H1 (cell line): ENCODE measurements at regions of chr1 and their contacts with region 1.

Region 1: DNA sequence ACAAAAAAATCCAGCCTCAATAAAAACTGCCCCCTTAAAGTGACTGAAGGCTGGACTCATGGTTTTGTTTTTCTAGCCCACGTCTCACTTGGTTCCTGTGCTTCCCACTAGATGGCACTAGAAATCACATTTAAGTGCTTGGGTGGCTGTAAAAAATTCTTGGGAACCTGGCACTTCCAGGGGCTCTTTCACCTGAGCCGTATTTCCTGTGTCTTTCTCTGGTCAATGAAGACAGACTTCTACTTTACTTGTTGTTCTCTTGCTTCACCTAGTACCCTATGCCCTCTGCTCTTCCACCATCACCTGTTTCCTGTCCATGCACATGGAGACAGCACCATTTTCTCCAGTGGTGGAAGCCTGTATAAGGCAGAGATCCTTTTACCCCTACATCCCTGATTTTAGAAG is 20.0 kb downstream of the METTL13 start:
- DNase-seq: no peak
- H3K4me3 ChIP-seq: no peak overlapping the region
- H3K27ac ChIP-seq: no peak overlapping the region
- H3K4me1 ChIP-seq: peaks cover 0 to 11% (median 5%) of the 10 kb centered on the region in 4 experiments; a peak in 3 of 7 replicates
- H3K27me3 ChIP-seq: no peaks in the 10 kb centered on the region
- CTCF ChIP-seq: peak in 2 of 3 experiments; percentile 75 to 87; a peak in 3 of 4 replicates
- EP300 ChIP-seq: no peak
- POLR2A ChIP-seq: no peak
- RAD21 ChIP-seq: peak; percentile 87 to 94

Region 2: GRCh38 chr1:171644805-171645483 is 156.5 kb before region 1 on chr1:
- CTCF ChIA-PET with region 1: interaction called, 52 read pairs
- POLR2A ChIA-PET with region 1: no interaction called
- DNase-seq: peak; percentile 82 to 89
- H3K4me3 ChIP-seq: peak overlapping the region in 1 of 4 experiments; percentile 14; a peak in 1 of 8 replicates
- H3K27ac ChIP-seq: no peak overlapping the region
- H3K4me1 ChIP-seq: peaks cover 2 to 15% (median 7%) of the 10 kb centered on the region in 4 experiments
- H3K27me3 ChIP-seq: no peaks in the 10 kb centered on the region
- CTCF ChIP-seq: peak; percentile 69 to 99 (median 89)
- EP300 ChIP-seq: no peak
- POLR2A ChIP-seq: no peak
- RAD21 ChIP-seq: peak; percentile 89 to 91

Region 3: GRCh38 chr1:171788696-171789095 is 12.8 kb before region 1 on chr1:
- CTCF ChIA-PET with region 1: interaction called, 24 read pairs
- POLR2A ChIA-PET with region 1: interaction called, 4 read pairs
- DNase-seq: no peak
- H3K4me3 ChIP-seq: no peak overlapping the region
- H3K27ac ChIP-seq: no peak overlapping the region
- H3K4me1 ChIP-seq: no peaks in the 10 kb centered on the region
- H3K27me3 ChIP-seq: no peaks in the 10 kb centered on the region
- CTCF ChIP-seq: no peak
- EP300 ChIP-seq: no peak
- POLR2A ChIP-seq: no peak
- RAD21 ChIP-seq: no peak

Region 4: DNA sequence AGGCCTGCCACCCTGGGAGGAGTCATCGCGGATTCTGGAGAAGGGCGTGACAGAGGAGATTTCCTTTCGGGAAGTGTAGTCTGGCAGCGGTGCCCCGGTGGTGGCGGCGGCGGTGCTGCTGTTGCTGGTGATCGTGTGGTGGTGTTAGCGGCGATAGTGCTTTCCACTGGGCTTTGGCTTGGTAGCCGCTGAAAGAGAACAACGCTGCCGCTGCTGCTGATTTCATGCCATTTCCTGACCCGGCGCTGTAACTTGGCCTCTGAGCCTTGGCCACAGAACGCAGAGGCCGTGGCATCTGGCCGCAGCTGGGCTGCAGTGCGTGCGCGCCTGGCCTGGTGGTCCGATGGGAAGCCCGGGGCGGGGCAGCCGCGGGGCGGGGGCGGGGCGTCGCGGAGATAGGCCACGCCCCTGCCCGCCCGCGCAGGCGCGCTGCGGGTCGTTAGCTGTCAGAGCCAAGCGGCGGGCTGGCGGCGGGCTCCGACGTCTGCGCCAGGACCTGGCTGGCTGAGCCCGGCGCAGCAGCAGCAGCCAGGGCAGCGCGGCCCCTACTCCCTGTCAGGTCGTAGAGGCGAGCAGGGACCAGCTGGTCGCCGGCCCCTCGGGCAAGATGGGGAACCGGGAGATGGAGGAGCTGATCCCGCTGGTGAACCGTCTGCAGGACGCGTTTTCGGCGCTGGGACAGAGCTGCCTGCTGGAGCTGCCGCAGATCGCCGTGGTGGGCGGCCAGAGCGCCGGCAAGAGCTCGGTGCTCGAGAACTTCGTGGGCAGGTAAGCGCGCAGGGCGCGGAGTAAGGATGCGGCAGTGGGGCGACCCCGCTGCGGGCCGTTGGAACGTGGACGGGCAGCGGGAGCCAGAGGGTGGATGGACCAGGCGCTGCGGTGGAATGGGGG is 39.8 kb after region 1 on chr1 and contains the start of gene DNM3:
- CTCF ChIA-PET with region 1: interaction called, 34 read pairs
- POLR2A ChIA-PET with region 1: no interaction called
- DNase-seq: peak; percentile 57 to 93
- H3K4me3 ChIP-seq: peak within 1 kb of the TSS; percentile 74 to 93 (median 88)
- H3K27ac ChIP-seq: no peak within 1 kb of the TSS
- H3K4me1 ChIP-seq: peaks cover 0 to 6% (median 2%) of the 10 kb centered on the region in 4 experiments; a peak in 1 of 7 replicates
- H3K27me3 ChIP-seq: peaks cover 0 to 4% (median 1%) of the 10 kb centered on the region in 4 experiments; a peak in 3 of 7 replicates
- CTCF ChIP-seq: no peak
- EP300 ChIP-seq: no peak
- POLR2A ChIP-seq: peak; percentile 42 to 72
- RAD21 ChIP-seq: no peak; a peak in 1 of 4 replicates
- total RNA-seq, gene DNM3: 7.4 and 8.5 TPM in 2 replicates

Region 5: GRCh38 chr1:171913385-171913784 is 111.9 kb after region 1 on chr1:
- CTCF ChIA-PET with region 1: interaction called, 11 read pairs
- POLR2A ChIA-PET with region 1: no interaction called
- DNase-seq: no peak
- H3K4me3 ChIP-seq: no peak overlapping the region
- H3K27ac ChIP-seq: no peak overlapping the region
- H3K4me1 ChIP-seq: peaks cover 0 to 8% (median 7%) of the 10 kb centered on the region in 4 experiments; a peak in 3 of 7 replicates
- H3K27me3 ChIP-seq: no peaks in the 10 kb centered on the region
- CTCF ChIP-seq: no peak
- EP300 ChIP-seq: no peak
- POLR2A ChIP-seq: no peak
- RAD21 ChIP-seq: no peak

Region 6: GRCh38 chr1:171965777-171966176 is 164.3 kb after region 1 on chr1:
- CTCF ChIA-PET with region 1: interaction called, 91 read pairs
- POLR2A ChIA-PET with region 1: no interaction called
- DNase-seq: no peak
- H3K4me3 ChIP-seq: no peak overlapping the region
- H3K27ac ChIP-seq: no peak overlapping the region
- H3K4me1 ChIP-seq: peaks cover 2 to 12% (median 7%) of the 10 kb centered on the region in 4 experiments; a peak in 6 of 7 replicates
- H3K27me3 ChIP-seq: no peaks in the 10 kb centered on the region
- CTCF ChIP-seq: no peak
- EP300 ChIP-seq: no peak
- POLR2A ChIP-seq: no peak
- RAD21 ChIP-seq: no peak

Region 7: DNA sequence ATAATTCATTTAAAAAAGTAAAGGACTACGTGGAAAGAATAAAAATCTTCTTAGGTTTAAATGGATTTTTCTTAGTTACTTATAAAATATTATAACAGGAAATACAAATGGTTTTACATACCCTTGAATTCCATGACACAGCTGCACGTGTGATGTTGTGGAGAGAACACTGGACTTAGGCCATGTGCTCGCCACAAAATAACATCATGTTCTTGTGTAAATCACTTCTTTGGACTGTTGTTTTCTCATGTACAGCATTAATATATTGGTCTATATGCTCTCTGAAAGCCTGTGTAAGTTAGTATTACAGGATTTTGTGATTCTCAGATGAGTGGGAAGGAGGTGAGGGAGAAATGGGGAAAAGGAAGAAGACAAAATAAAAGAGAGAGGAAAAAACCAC is 268.0 kb after region 1 on chr1:
- CTCF ChIA-PET with region 1: interaction called, 14 read pairs
- POLR2A ChIA-PET with region 1: no interaction called
- DNase-seq: no peak
- H3K4me3 ChIP-seq: no peak overlapping the region
- H3K27ac ChIP-seq: no peak overlapping the region
- H3K4me1 ChIP-seq: no peaks in the 10 kb centered on the region
- H3K27me3 ChIP-seq: no peaks in the 10 kb centered on the region
- CTCF ChIP-seq: no peak
- EP300 ChIP-seq: no peak
- POLR2A ChIP-seq: no peak
- RAD21 ChIP-seq: no peak